Naive thymus-derived CD4-positive, alpha-beta T cell (primary cell): ENCODE measurements at regions of chr13 and their contacts with region 1.

Region 1: GRCh38 chr13:48303359-48304142 is at the start of gene RB1:
- DNase-seq: peak; percentile 85 to 92 (median 89)
- ATAC-seq: peak; percentile 92
- H3K4me3 ChIP-seq: peak within 1 kb of the TSS; percentile 85
- H3K4me3 Mint-ChIP-seq: peak within 1 kb of the TSS; percentile 76 to 99 (median 94)
- H3K27ac ChIP-seq: peak within 1 kb of the TSS; percentile 99
- H3K27ac Mint-ChIP-seq: peak within 1 kb of the TSS; percentile 93 to 98 (median 97)
- H3K4me1 ChIP-seq: peaks cover 10 to 15% of the 10 kb centered on the region in 2 donors
- H3K4me1 Mint-ChIP-seq: peaks cover 16 to 47% (median 40%) of the 10 kb centered on the region in 7 donors
- H3K27me3 ChIP-seq: no peaks in the 10 kb centered on the region
- H3K27me3 Mint-ChIP-seq: no peaks in the 10 kb centered on the region
- total RNA-seq, gene RB1: 18.0 to 37.1 (median 23.6) TPM

Region 2: GRCh38 chr13:48000778-48001628 is 302.5 kb before region 1 on chr13 and contains the start of gene SUCLA2:
- CTCF ChIA-PET with region 1: no interaction called
- POLR2A ChIA-PET with region 1: no interaction called
- intact Hi-C with region 1: loop called in 1 of 2 experiments (anchors 1 kb)
- DNase-seq: peak; percentile 75 to 96 (median 88)
- ATAC-seq: peak; percentile 100
- H3K4me3 ChIP-seq: peak within 1 kb of the TSS; percentile 97
- H3K4me3 Mint-ChIP-seq: peak within 1 kb of the TSS; percentile 88 to 97 (median 96)
- H3K27ac ChIP-seq: peak within 1 kb of the TSS; percentile 81
- H3K27ac Mint-ChIP-seq: peak within 1 kb of the TSS; percentile 75 to 96 (median 91)
- H3K4me1 ChIP-seq: peaks cover 7 to 10% of the 10 kb centered on the region in 2 donors
- H3K4me1 Mint-ChIP-seq: peaks cover 24 to 48% (median 42%) of the 10 kb centered on the region in 7 donors
- H3K27me3 ChIP-seq: no peaks in the 10 kb centered on the region
- H3K27me3 Mint-ChIP-seq: peaks cover 0 to 2% (median 0%) of the 10 kb centered on the region in 5 donors
- total RNA-seq, gene SUCLA2: 20.0 to 36.6 (median 26.4) TPM

Region 3: GRCh38 chr13:48126944-48127830 is 176.4 kb before region 1 on chr13:
- CTCF ChIA-PET with region 1: interaction called, 3 read pairs
- POLR2A ChIA-PET with region 1: interaction called, 3 read pairs
- intact Hi-C with region 1: loop called (anchors 1 kb)
- DNase-seq: peak in 8 of 9 donors; percentile 20 to 84 (median 80)
- ATAC-seq: peak; percentile 96
- H3K4me3 ChIP-seq: no peak overlapping the region
- H3K4me3 Mint-ChIP-seq: peak overlapping the region in 9 of 10 donors; percentile 25 to 69 (median 52)
- H3K27ac ChIP-seq: peak overlapping the region; percentile 54
- H3K27ac Mint-ChIP-seq: peak overlapping the region in 8 of 9 donors; percentile 83 to 95 (median 89)
- H3K4me1 ChIP-seq: peaks cover 5 to 15% of the 10 kb centered on the region in 2 donors
- H3K4me1 Mint-ChIP-seq: peaks cover 14 to 42% (median 35%) of the 10 kb centered on the region in 7 donors
- H3K27me3 ChIP-seq: no peaks in the 10 kb centered on the region
- H3K27me3 Mint-ChIP-seq: peaks cover 0 to 3% (median 0%) of the 10 kb centered on the region in 5 donors

Region 4: GRCh38 chr13:48265217-48265815 is 38.2 kb before region 1 on chr13:
- CTCF ChIA-PET with region 1: no interaction called
- POLR2A ChIA-PET with region 1: interaction called, 5 read pairs
- intact Hi-C with region 1: loop called (anchors 2 to 5 kb)
- DNase-seq: peak in 3 of 9 donors; percentile 17 to 38 (median 27)
- ATAC-seq: peak; percentile 48
- H3K4me3 ChIP-seq: no peak overlapping the region
- H3K4me3 Mint-ChIP-seq: peak overlapping the region in 9 of 10 donors; percentile 15 to 72 (median 54)
- H3K27ac ChIP-seq: no peak overlapping the region
- H3K27ac Mint-ChIP-seq: peak overlapping the region; percentile 7 to 92 (median 86)
- H3K4me1 ChIP-seq: peaks cover 0 to 22% of the 10 kb centered on the region in 2 donors
- H3K4me1 Mint-ChIP-seq: peaks cover 22 to 73% (median 54%) of the 10 kb centered on the region in 7 donors
- H3K27me3 ChIP-seq: no peaks in the 10 kb centered on the region
- H3K27me3 Mint-ChIP-seq: no peaks in the 10 kb centered on the region

Region 5: GRCh38 chr13:48412881-48413351 is 109.4 kb after region 1 on chr13 and contains the start of gene LPAR6:
- CTCF ChIA-PET with region 1: no interaction called
- POLR2A ChIA-PET with region 1: no interaction called
- intact Hi-C with region 1: loop called in 1 of 2 experiments (anchors 5 kb)
- DNase-seq: peak in 7 of 9 donors; percentile 30 to 55 (median 47)
- ATAC-seq: peak; percentile 67
- H3K4me3 ChIP-seq: peak within 1 kb of the TSS; percentile 73
- H3K4me3 Mint-ChIP-seq: peak within 1 kb of the TSS; percentile 86 to 100 (median 98)
- H3K27ac ChIP-seq: peak within 1 kb of the TSS; percentile 90
- H3K27ac Mint-ChIP-seq: peak within 1 kb of the TSS; percentile 92 to 100 (median 94)
- H3K4me1 ChIP-seq: peaks cover 9 to 19% of the 10 kb centered on the region in 2 donors
- H3K4me1 Mint-ChIP-seq: peaks cover 19 to 47% (median 40%) of the 10 kb centered on the region in 7 donors
- H3K27me3 ChIP-seq: no peaks in the 10 kb centered on the region
- H3K27me3 Mint-ChIP-seq: no peaks in the 10 kb centered on the region
- total RNA-seq, gene LPAR6: 24.1 to 60.4 (median 32.8) TPM

Region 6: DNA sequence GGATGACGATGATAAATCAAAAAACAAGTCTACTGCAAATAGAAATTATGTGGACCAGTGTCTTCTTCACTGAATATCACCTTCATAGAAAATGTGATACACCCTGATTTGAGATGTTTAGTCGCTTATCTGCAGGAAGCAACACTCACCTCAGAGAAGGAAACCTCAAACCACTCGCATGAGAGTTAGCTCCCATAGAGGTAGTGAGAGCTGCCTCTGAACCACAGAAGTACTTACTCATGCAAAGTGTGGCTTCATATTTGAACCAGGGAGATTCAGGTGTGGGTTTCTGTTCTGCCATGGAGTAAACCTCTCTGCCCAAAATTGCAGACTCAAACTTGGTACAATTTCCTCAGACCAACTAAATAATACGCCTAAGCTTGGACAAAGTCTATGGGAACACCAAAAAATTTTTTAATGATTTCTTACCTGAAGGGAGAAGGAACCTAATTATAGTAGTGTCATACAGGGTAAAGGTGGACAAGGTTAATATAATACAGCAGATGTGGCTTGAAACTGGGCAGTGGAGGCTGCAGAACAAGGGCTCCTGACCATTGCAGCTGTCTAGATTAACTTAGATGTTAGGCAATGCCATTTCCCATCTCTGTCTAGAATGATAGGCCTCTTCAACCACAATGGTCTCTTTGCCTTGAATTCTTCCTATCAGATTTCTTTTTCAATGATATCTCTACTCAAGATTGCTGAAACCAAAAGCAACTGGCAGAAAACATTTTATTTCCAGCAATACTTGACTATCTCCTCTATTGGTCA is 258.9 kb after region 1 on chr13:
- CTCF ChIA-PET with region 1: no interaction called
- POLR2A ChIA-PET with region 1: no interaction called
- intact Hi-C with region 1: loop called in 1 of 2 experiments (anchors 1 kb)
- DNase-seq: peak in 8 of 9 donors; percentile 67 to 87 (median 79)
- ATAC-seq: peak; percentile 100
- H3K4me3 ChIP-seq: peak overlapping the region; percentile 12
- H3K4me3 Mint-ChIP-seq: peak overlapping the region in 9 of 10 donors; percentile 0 to 68 (median 54)
- H3K27ac ChIP-seq: no peak overlapping the region
- H3K27ac Mint-ChIP-seq: peak overlapping the region in 2 of 9 donors; percentile 71 to 82
- H3K4me1 ChIP-seq: peaks cover 22 to 31% of the 10 kb centered on the region in 2 donors
- H3K4me1 Mint-ChIP-seq: peaks cover 28 to 51% (median 36%) of the 10 kb centered on the region in 7 donors
- H3K27me3 ChIP-seq: no peaks in the 10 kb centered on the region
- H3K27me3 Mint-ChIP-seq: peaks cover 7 to 67% (median 13%) of the 10 kb centered on the region in 5 donors

Region 7: DNA sequence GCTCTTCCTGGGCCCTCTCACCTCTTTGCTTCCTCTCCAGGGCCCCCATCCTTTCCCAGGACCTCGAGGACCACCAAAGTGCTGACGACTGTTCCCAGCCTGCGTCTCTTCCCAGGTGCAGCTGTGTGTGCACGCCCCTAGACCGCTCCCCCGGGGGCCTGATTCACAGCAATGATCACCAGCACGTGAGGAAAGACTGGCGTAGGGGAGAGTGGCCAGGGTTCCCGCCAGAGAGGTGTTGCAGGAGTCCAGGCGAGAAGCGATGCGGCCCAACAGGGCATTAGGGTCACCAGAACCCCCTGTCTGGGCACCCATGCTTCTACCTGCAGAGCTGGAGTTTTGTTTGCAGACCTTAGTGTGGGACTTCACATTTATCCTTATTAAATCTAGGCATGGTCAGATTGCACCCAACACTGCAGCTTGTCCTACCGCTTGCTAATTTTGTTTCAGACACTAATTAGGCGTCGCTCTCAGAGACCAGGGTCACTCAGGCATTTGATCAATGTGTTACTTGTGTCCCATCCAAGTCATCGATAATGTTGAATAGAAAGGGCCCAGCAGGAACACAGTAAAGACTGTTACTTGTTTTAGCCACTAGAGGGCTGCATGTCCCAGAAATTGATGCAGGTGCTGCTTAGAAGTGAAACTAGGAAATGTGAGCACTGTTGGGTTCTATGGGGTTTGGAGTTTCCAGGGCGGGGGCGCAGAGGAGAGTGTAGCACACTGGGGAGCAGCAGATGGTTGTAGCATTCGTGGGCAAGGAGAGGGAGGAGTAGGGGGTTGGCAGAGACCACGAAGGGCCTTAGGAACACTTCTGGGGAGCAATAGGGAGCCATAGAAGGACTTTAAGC is 997.4 kb after region 1 on chr13:
- CTCF ChIA-PET with region 1: no interaction called
- POLR2A ChIA-PET with region 1: no interaction called
- intact Hi-C with region 1: no loop called
- DNase-seq: peak in 8 of 9 donors; percentile 67 to 82 (median 75)
- ATAC-seq: peak; percentile 96
- H3K4me3 ChIP-seq: peak overlapping the region; percentile 67
- H3K4me3 Mint-ChIP-seq: peak overlapping the region; percentile 63 to 90 (median 80)
- H3K27ac ChIP-seq: no peak overlapping the region
- H3K27ac Mint-ChIP-seq: peak overlapping the region; percentile 16 to 82 (median 71)
- H3K4me1 ChIP-seq: no peaks in the 10 kb centered on the region
- H3K4me1 Mint-ChIP-seq: peaks cover 8 to 28% (median 14%) of the 10 kb centered on the region in 7 donors
- H3K27me3 ChIP-seq: no peaks in the 10 kb centered on the region
- H3K27me3 Mint-ChIP-seq: no peaks in the 10 kb centered on the region

Region 8: DNA sequence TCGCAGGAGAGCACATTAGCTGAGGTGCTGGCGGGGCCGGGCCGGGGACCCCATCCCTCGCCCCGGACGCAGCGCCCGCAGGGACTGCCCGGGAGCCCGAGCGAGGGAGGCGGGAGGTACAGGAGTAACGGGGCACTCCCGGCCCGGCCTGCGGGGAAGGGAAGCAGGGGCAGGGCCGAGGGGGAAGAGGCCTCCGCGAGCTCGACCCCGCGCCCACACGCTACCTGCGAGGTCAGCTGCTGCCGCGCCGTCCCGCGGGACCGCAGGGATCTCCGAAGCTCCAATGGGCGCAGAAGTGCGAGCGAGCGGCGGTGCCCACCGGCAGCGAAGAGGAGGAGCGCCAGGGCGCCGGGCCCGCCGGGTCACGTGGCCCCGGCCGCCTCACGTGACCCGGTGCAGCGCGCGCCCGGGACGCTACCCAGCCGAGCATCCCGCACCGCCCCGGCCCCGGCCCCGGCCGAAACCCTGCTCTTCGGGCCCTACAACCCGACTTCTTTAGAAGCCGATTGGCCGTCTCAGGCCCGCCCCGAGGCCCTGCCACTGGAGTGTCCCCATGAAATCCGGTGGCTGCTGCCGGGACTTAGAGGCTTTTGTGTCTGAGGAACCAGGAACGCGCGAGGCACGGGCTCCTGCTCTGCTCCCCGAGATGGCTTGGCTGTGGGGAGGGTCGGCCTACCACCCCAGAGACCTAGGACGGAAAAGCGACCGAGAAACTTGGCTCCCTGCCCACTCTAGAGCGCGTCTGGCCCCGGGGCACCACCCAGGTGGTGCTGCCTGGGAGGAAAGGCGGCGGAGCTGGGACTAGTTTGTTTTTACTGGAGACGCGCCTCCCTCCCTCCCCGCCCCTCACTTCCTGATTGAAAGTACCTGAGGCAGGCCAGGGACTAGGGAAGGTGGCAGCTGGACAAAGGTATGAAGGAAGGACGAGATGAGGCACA is 1281.9 kb after region 1 on chr13 and contains the start of gene RCBTB1:
- CTCF ChIA-PET with region 1: no interaction called
- POLR2A ChIA-PET with region 1: no interaction called
- intact Hi-C with region 1: loop called in 1 of 2 experiments (anchors 10 kb)
- DNase-seq: peak; percentile 47 to 74 (median 66)
- ATAC-seq: peak; percentile 97
- H3K4me3 ChIP-seq: peak within 1 kb of the TSS; percentile 56
- H3K4me3 Mint-ChIP-seq: peak within 1 kb of the TSS; percentile 83 to 100 (median 92)
- H3K27ac ChIP-seq: peak within 1 kb of the TSS; percentile 82
- H3K27ac Mint-ChIP-seq: peak within 1 kb of the TSS; percentile 86 to 96 (median 94)
- H3K4me1 ChIP-seq: peaks cover 10 to 16% of the 10 kb centered on the region in 2 donors
- H3K4me1 Mint-ChIP-seq: peaks cover 32 to 53% (median 50%) of the 10 kb centered on the region in 7 donors
- H3K27me3 ChIP-seq: no peaks in the 10 kb centered on the region
- H3K27me3 Mint-ChIP-seq: peaks cover 0 to 3% (median 0%) of the 10 kb centered on the region in 5 donors
- total RNA-seq, gene RCBTB1: 16.3 to 22.2 (median 20.4) TPM

Region 9: GRCh38 chr13:49936085-49936940 is 1632.8 kb after region 1 on chr13 and contains the start of gene SPRYD7:
- CTCF ChIA-PET with region 1: no interaction called
- POLR2A ChIA-PET with region 1: no interaction called
- intact Hi-C with region 1: no loop called
- DNase-seq: peak; percentile 82 to 99 (median 90)
- ATAC-seq: peak; percentile 98
- H3K4me3 ChIP-seq: peak within 1 kb of the TSS; percentile 99
- H3K4me3 Mint-ChIP-seq: peak within 1 kb of the TSS; percentile 86 to 99 (median 96)
- H3K27ac ChIP-seq: peak within 1 kb of the TSS; percentile 69
- H3K27ac Mint-ChIP-seq: peak within 1 kb of the TSS; percentile 74 to 95 (median 86)
- H3K4me1 ChIP-seq: peaks cover 10 to 14% of the 10 kb centered on the region in 2 donors
- H3K4me1 Mint-ChIP-seq: peaks cover 12 to 28% (median 15%) of the 10 kb centered on the region in 7 donors
- H3K27me3 ChIP-seq: no peaks in the 10 kb centered on the region
- H3K27me3 Mint-ChIP-seq: peaks cover 0 to 33% (median 0%) of the 10 kb centered on the region in 5 donors
- total RNA-seq, gene SPRYD7: 1.7 to 3.1 (median 2.3) TPM